Activated CD4-positive, alpha-beta memory T cell treated with anti-CD3 and anti-CD28 coated beads for 36 hours (primary cell): ENCODE measurements at regions of chr1 and their contacts with region 1.

Region 1: GRCh38 chr1:154335025-154335714 is 9.8 kb downstream of the ATP8B2 start:
- DNase-seq: peak; percentile 94
- H3K4me3 Mint-ChIP-seq: no peak overlapping the region
- H3K27ac Mint-ChIP-seq: peak overlapping the region; percentile 79
- H3K4me1 Mint-ChIP-seq: peaks cover 66% of the 10 kb centered on the region
- H3K27me3 Mint-ChIP-seq: no peaks in the 10 kb centered on the region

Region 2: GRCh38 chr1:154183045-154183915 is 151.9 kb before region 1 on chr1:
- CTCF ChIA-PET with region 1: interaction called, 10 read pairs
- POLR2A ChIA-PET with region 1: no interaction called
- intact Hi-C with region 1: no loop called
- DNase-seq: peak; percentile 98
- H3K4me3 Mint-ChIP-seq: peak overlapping the region; percentile 98
- H3K27ac Mint-ChIP-seq: peak overlapping the region; percentile 96
- H3K4me1 Mint-ChIP-seq: peaks cover 37% of the 10 kb centered on the region
- H3K27me3 Mint-ChIP-seq: no peaks in the 10 kb centered on the region

Region 3: DNA sequence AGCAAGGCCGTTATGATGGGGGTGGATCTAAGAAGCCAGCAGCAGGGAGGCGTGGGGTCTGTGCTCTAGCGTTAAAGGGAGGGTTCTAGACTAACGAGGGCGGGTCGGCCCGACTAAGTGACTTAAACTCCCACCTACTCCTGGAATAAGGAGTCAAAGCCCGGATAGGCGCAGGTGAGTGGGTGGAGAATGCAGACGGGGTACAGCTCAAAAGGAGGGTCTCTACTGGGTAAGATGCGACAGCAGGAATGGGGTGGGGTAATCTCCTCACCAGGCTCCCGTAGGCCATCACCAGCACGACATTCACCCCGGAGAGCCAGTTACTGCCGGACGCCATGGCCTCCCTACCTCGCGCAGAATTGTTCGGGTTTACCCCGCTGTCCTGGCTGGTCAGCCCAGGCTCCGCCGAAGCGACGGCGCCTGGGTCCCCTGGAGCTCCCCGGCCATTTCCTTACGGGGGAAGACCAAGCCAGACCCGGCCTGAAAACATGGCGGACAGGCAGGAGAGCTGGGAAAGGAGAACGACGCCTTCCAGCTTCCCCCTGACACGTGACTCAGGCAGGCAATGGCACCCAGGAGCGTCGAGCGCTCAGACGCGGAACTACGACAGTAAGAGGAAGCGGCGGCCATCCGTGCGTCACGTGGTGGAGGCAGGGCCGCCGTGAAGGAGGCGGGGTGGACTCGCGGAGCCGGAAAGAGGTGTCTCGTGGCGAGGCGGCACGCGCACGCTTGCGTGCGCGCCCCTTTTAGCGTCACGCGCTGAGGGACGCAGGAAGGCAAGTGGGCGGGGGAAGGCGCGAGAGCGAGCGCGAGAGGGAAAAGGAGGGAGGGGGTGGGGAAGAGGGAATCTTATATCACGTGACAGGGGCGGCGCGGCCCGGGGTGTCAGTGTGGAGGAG is 114.8 kb before region 1 on chr1 and contains the start of gene UBAP2L:
- CTCF ChIA-PET with region 1: interaction called, 11 read pairs
- POLR2A ChIA-PET with region 1: no interaction called
- intact Hi-C with region 1: no loop called
- DNase-seq: peak; percentile 99
- H3K4me3 Mint-ChIP-seq: peak within 1 kb of the TSS; percentile 90
- H3K27ac Mint-ChIP-seq: peak within 1 kb of the TSS; percentile 94
- H3K4me1 Mint-ChIP-seq: peaks cover 68% of the 10 kb centered on the region
- H3K27me3 Mint-ChIP-seq: peaks cover 2% of the 10 kb centered on the region
- total RNA-seq, gene UBAP2L: 180 to 183 TPM

Region 4: GRCh38 chr1:154295408-154296235 is 39.5 kb before region 1 on chr1:
- CTCF ChIA-PET with region 1: interaction called, 13 read pairs
- POLR2A ChIA-PET with region 1: no interaction called
- intact Hi-C with region 1: no loop called
- DNase-seq: no peak
- H3K4me3 Mint-ChIP-seq: no peak overlapping the region
- H3K27ac Mint-ChIP-seq: no peak overlapping the region
- H3K4me1 Mint-ChIP-seq: peaks cover 3% of the 10 kb centered on the region
- H3K27me3 Mint-ChIP-seq: no peaks in the 10 kb centered on the region

Region 5: DNA sequence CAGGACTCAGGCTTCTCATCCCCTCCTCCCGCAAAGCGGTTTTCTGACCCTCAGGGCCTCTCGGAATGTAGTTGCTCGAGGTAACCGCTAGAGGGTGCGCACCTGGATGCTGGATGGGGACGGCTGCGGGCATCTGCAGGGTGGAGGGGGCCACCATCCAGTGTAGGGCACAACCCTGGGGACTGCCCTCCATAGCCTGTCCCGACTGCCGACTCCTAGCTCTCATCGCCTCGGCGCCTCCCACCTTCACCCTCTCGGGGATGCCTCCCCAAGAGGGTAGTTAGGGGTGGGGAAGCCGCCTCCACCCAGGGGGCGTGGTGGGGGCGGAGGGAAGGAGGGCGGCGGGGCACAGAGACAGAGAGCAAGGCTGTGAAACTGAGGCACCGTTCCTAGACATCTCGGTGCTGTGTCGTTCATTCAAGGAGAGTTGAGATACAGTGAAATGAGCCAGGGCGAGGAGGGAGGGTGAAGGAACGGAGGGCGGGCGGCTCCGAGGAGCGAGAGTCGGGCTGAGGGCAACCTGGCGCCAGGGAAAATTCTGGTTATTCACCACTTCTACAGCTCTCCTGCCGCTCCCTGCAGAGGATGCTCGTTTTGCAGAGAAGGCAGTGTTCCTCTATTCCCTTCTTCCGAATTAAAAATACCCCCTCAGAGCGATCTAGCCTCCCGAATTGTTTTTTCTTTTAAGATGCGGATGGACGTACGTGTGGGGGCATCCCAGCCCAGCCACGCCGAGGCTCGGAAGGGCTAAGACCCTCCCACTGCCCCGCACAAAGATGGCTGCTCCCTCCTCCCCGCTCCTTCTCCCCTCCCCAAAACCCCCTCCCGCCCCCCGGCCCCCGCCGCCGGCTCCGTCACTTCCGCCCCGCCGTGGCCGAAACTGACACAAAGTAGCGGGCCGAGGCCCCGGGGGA is 10.2 kb before region 1 on chr1 and contains the start of gene ATP8B2:
- CTCF ChIA-PET with region 1: interaction called, 173 read pairs
- POLR2A ChIA-PET with region 1: interaction called, 12 read pairs
- intact Hi-C with region 1: loop called (anchors 1 kb)
- DNase-seq: peak; percentile 91
- H3K4me3 Mint-ChIP-seq: peak within 1 kb of the TSS; percentile 98
- H3K27ac Mint-ChIP-seq: peak within 1 kb of the TSS; percentile 94
- H3K4me1 Mint-ChIP-seq: peaks cover 36% of the 10 kb centered on the region
- H3K27me3 Mint-ChIP-seq: no peaks in the 10 kb centered on the region
- total RNA-seq, gene ATP8B2: 58.5 to 59.9 TPM

Region 6: GRCh38 chr1:154398141-154398540 is 63.0 kb after region 1 on chr1:
- CTCF ChIA-PET with region 1: interaction called, 10 read pairs
- POLR2A ChIA-PET with region 1: no interaction called
- intact Hi-C with region 1: no loop called
- DNase-seq: no peak
- H3K4me3 Mint-ChIP-seq: peak overlapping the region; percentile 51
- H3K27ac Mint-ChIP-seq: peak overlapping the region; percentile 74
- H3K4me1 Mint-ChIP-seq: peaks cover 44% of the 10 kb centered on the region
- H3K27me3 Mint-ChIP-seq: no peaks in the 10 kb centered on the region

Region 7: DNA sequence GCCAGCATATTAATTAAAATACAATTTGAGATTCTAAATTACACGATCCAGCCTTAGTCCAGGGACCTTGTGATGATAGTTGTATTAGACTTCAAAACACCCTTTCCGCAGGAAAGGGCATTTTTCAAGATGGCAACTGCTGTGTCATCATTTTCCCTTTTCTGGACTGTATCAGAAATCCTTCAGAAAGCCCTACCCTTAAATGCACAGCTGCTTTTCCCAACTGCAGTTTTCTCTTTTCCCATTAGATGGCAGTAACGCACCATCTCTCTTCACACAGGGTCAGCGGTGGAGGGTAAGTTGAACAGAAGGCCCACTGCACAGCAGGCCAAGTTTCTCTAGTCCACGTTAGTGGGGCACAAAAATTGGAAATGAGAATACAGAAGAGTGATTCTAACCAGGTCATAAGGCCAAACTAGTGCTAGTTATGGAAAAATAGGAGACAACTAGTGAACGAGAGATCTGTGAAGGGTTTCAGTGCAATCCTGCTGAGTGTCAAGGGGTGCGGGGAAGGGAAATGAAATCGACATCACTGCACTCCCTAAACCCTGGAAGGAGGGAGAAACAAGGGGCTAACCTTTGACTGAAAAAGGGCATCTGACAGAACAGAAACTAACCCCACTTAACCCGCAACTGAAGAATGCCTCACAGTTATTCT is 144.7 kb after region 1 on chr1:
- CTCF ChIA-PET with region 1: interaction called, 15 read pairs
- POLR2A ChIA-PET with region 1: no interaction called
- intact Hi-C with region 1: no loop called
- DNase-seq: peak; percentile 71
- H3K4me3 Mint-ChIP-seq: no peak overlapping the region
- H3K27ac Mint-ChIP-seq: peak overlapping the region; percentile 11
- H3K4me1 Mint-ChIP-seq: peaks cover 27% of the 10 kb centered on the region
- H3K27me3 Mint-ChIP-seq: no peaks in the 10 kb centered on the region

Region 8: GRCh38 chr1:154736841-154737240 is 401.7 kb after region 1 on chr1:
- CTCF ChIA-PET with region 1: no interaction called
- POLR2A ChIA-PET with region 1: no interaction called
- intact Hi-C with region 1: no loop called
- DNase-seq: peak; percentile 82
- H3K4me3 Mint-ChIP-seq: no peak overlapping the region
- H3K27ac Mint-ChIP-seq: peak overlapping the region; percentile 35
- H3K4me1 Mint-ChIP-seq: peaks cover 42% of the 10 kb centered on the region
- H3K27me3 Mint-ChIP-seq: peaks cover 25% of the 10 kb centered on the region